Mucosa of descending colon (tissue), 3 donors: ENCODE measurements at regions of chr20 and their contacts with region 1.

Region 1: DNA sequence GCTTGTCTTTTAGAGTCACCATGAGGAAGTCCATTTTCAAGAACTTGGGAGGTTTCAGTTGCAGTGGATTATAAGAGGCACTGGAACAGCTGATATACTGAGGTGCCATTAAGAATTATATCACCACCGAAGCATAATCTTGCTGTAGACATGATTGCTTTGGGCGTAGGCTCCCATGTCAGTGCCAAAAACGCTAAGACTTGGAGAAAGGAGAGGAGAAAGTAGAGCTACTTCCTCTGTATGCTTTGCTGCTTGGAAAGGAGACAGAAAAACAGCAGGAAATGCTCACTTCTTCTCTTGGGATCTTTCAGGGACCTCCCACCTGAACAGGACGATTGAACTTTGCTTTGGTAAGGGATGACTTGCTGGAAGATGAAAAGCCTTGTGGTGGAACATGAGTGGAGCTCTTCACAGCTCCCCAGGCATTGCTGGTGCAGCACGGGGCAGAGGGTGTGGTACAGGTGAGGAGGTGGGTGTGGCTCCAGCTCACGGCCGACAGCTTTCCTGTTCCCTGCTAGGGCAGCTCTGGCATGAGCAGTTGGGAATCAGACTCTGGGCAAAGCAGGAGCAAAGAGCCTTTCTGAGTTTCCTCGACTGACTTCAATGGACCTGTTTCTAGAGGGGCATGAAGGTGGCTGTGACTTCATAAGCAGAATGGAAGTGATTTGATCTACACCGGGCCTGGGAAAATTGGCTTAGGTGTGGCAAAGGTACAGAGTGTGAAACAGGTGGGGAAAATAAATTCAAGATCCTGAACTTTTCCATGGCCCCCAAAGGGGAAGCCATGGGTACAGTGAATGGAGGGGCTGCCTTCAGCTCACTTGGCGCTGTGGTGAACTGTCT is 190.5 kb upstream of the JAG1 start:
- DNase-seq: peak; percentile 85 to 91 (median 85)
- ATAC-seq: peak; percentile 96
- H3K4me3 ChIP-seq: no peak overlapping the region
- H3K4me1 ChIP-seq: peaks cover 17% of the 10 kb centered on the region
- CTCF ChIP-seq: no peak

Region 2: DNA sequence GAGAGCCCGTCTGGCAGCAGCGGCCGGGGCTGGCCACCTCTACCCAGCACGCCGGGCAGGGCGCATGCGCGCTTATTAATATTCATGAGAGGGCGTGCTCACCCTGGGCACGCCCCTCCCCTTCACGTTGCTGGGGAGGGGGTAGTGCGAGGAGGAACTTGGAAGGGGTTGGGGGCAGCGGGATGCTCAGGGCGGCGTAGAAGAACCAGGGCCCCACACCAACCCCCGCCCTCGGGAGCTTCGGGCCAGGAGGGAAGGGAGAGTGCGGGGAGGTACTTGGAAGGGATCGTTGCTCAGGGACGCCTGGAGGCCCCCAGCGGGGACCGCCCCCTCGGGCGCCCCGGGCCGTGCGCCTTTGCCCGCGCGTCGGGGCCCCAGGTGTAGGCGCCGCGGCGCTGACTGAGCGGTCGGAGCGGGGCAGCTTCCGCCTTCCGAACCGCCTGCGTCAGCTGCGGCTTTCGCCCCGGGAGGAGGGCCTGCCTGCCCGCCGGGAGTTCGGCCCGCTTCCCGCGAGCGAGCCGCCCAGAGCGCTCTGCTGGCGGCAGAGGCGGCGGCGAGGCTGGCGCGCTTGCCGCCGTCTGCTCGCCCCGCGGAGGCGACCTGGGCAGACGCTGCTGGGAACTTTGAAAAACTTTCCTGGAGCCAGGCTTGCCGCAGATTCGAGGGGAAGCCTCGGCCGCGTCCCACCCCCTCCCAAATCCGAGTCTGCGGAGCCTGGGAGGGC is 190.1 kb before region 1 on chr20 and contains the start of gene JAG1:
- intact Hi-C with region 1: loop called in 1 of 2 experiments (anchors 10 kb)
- DNase-seq: peak; percentile 96
- ATAC-seq: peak; percentile 80
- H3K4me3 ChIP-seq: peak within 1 kb of the TSS; percentile 86
- H3K4me1 ChIP-seq: peaks cover 12% of the 10 kb centered on the region
- CTCF ChIP-seq: no peak
- total RNA-seq, gene JAG1: 87.1 to 104 (median 94.4) TPM